Heart right ventricle (tissue), 16 donors: ENCODE measurements at regions of chr4 and their contacts with region 1.

Region 1: GRCh38 chr4:159102622-159103383 is at the start of gene RAPGEF2:
- DNase-seq: peak; percentile 90 to 95
- ATAC-seq: peak; percentile 95 to 97 (median 96)
- H3K4me3 ChIP-seq: peak within 1 kb of the TSS; percentile 66 to 99 (median 99)
- H3K27ac ChIP-seq: peak within 1 kb of the TSS; percentile 95 to 98 (median 96)
- H3K4me1 ChIP-seq: peaks cover 0 to 42% (median 32%) of the 10 kb centered on the region in 9 donors
- H3K27me3 ChIP-seq: no peaks in the 10 kb centered on the region
- CTCF ChIP-seq: peak in 2 of 9 donors; percentile 5 to 15
- total RNA-seq, gene RAPGEF2: 36.1 to 68.8 (median 54.6) TPM

Region 2: GRCh38 chr4:158856852-158857251 is 246.0 kb before region 1 on chr4:
- intact Hi-C with region 1: loop called in 1 of 10 experiments (anchors 10 kb)
- DNase-seq: no peak
- ATAC-seq: peak in 7 of 8 donors; percentile 29 to 85 (median 76)
- H3K4me3 ChIP-seq: no peak overlapping the region
- H3K27ac ChIP-seq: no peak overlapping the region
- H3K4me1 ChIP-seq: peaks cover 0 to 18% (median 4%) of the 10 kb centered on the region in 9 donors
- H3K27me3 ChIP-seq: no peaks in the 10 kb centered on the region
- CTCF ChIP-seq: peak in 8 of 9 donors; percentile 23 to 75 (median 60)

Region 3: GRCh38 chr4:158906073-158906472 is 196.7 kb before region 1 on chr4:
- intact Hi-C with region 1: loop called in 1 of 10 experiments (anchors 10 kb)
- DNase-seq: no peak
- ATAC-seq: no peak
- H3K4me3 ChIP-seq: no peak overlapping the region
- H3K27ac ChIP-seq: peak overlapping the region in 1 of 10 donors; percentile 32
- H3K4me1 ChIP-seq: peaks cover 0 to 24% (median 7%) of the 10 kb centered on the region in 9 donors
- H3K27me3 ChIP-seq: no peaks in the 10 kb centered on the region
- CTCF ChIP-seq: no peak

Region 4: DNA sequence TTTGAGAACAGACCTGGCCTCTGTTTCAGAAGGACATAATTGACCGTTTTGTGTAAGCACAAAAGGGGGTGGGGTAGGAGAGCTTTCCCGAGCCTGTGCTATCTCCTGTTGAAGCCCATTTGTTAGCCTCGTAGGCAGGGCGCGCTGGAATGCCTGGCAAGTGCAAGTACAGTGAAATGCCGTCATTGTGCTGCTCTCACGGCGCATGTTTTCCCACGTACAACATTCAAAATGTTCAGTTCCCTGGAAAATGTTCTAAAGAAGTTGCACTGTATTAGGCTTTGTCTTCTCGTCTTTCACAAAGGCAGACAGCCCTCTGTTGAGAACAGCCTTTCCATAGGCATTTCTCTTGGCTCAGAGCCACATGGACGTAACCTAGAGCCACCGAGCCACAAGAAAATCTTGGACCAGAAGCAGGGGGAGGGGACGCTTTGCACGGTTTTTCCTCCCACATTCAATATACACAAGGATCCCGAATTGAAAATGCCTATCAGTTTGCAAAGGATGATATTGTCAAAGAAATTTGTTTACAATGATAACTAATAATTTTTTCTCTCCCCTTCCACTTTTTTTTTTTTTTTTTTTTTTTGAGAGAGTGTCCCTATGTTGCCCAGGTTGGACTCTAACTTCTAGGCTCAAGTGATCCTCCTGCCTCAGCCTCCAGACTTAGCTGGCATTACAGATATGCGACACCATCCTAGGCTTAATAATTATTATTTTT is 54.5 kb before region 1 on chr4:
- intact Hi-C with region 1: loop called in 1 of 10 experiments (anchors 2 kb)
- DNase-seq: peak; percentile 64 to 75
- ATAC-seq: peak; percentile 79 to 98 (median 96)
- H3K4me3 ChIP-seq: peak overlapping the region in 9 of 10 donors; percentile 11 to 55 (median 45)
- H3K27ac ChIP-seq: peak overlapping the region in 5 of 10 donors; percentile 18 to 60 (median 50)
- H3K4me1 ChIP-seq: peaks cover 0 to 19% (median 6%) of the 10 kb centered on the region in 9 donors
- H3K27me3 ChIP-seq: no peaks in the 10 kb centered on the region
- CTCF ChIP-seq: peak in 2 of 9 donors; percentile 27 to 28

Region 5: GRCh38 chr4:159169404-159170302 is 66.8 kb after region 1 on chr4:
- intact Hi-C with region 1: loop called in 8 of 10 experiments (anchors 2 to 10 kb)
- DNase-seq: no peak
- ATAC-seq: no peak
- H3K4me3 ChIP-seq: no peak overlapping the region
- H3K27ac ChIP-seq: no peak overlapping the region
- H3K4me1 ChIP-seq: peaks cover 0 to 94% (median 51%) of the 10 kb centered on the region in 9 donors
- H3K27me3 ChIP-seq: no peaks in the 10 kb centered on the region
- CTCF ChIP-seq: no peak

Region 6: GRCh38 chr4:159446266-159446976 is 343.6 kb after region 1 on chr4:
- intact Hi-C with region 1: loop called in 1 of 10 experiments (anchors 10 kb)
- DNase-seq: peak; percentile 16 to 59
- ATAC-seq: peak; percentile 96 to 99 (median 97)
- H3K4me3 ChIP-seq: no peak overlapping the region
- H3K27ac ChIP-seq: peak overlapping the region in 4 of 10 donors; percentile 1 to 36 (median 31)
- H3K4me1 ChIP-seq: peaks cover 2 to 18% (median 10%) of the 10 kb centered on the region in 9 donors
- H3K27me3 ChIP-seq: no peaks in the 10 kb centered on the region
- CTCF ChIP-seq: peak; percentile 79 to 96 (median 90)